Ovary (tissue), 10 donors: ENCODE measurements at regions of chr18 and their contacts with region 1.

Region 1: GRCh38 chr18:5546660-5547059 is 2.9 kb upstream of the EPB41L3 start:
- DNase-seq: no peak
- H3K4me3 ChIP-seq: no peak overlapping the region
- H3K27ac ChIP-seq: no peak overlapping the region
- H3K4me1 ChIP-seq: peaks cover 3% of the 10 kb centered on the region
- H3K27me3 ChIP-seq: no peaks in the 10 kb centered on the region
- CTCF ChIP-seq: peak in 1 of 3 donors; percentile 17
- EP300 ChIP-seq: no peak
- POLR2A ChIP-seq: no peak

Region 2: GRCh38 chr18:5424903-5425664 is 121.6 kb before region 1 on chr18:
- intact Hi-C with region 1: loop called in 1 of 4 experiments (anchors 10 kb)
- DNase-seq: no peak
- H3K4me3 ChIP-seq: no peak overlapping the region
- H3K27ac ChIP-seq: no peak overlapping the region
- H3K4me1 ChIP-seq: no peaks in the 10 kb centered on the region
- H3K27me3 ChIP-seq: no peaks in the 10 kb centered on the region
- CTCF ChIP-seq: peak in 1 of 3 donors; percentile 36
- EP300 ChIP-seq: no peak
- POLR2A ChIP-seq: no peak

Region 3: GRCh38 chr18:5456577-5457463 is 89.8 kb before region 1 on chr18:
- intact Hi-C with region 1: no loop called
- DNase-seq: no peak
- H3K4me3 ChIP-seq: no peak overlapping the region
- H3K27ac ChIP-seq: no peak overlapping the region
- H3K4me1 ChIP-seq: no peaks in the 10 kb centered on the region
- H3K27me3 ChIP-seq: no peaks in the 10 kb centered on the region
- CTCF ChIP-seq: peak in 1 of 3 donors; percentile 11
- EP300 ChIP-seq: no peak
- POLR2A ChIP-seq: no peak

Region 4: GRCh38 chr18:5596585-5596984 is 49.9 kb after region 1 on chr18:
- intact Hi-C with region 1: no loop called
- DNase-seq: no peak
- H3K4me3 ChIP-seq: no peak overlapping the region
- H3K27ac ChIP-seq: no peak overlapping the region
- H3K4me1 ChIP-seq: no peaks in the 10 kb centered on the region
- H3K27me3 ChIP-seq: no peaks in the 10 kb centered on the region
- CTCF ChIP-seq: no peak
- EP300 ChIP-seq: no peak
- POLR2A ChIP-seq: no peak

Region 5: GRCh38 chr18:5806860-5807259 is 260.2 kb after region 1 on chr18:
- intact Hi-C with region 1: no loop called
- DNase-seq: no peak
- H3K4me3 ChIP-seq: no peak overlapping the region
- H3K27ac ChIP-seq: no peak overlapping the region
- H3K4me1 ChIP-seq: no peaks in the 10 kb centered on the region
- H3K27me3 ChIP-seq: no peaks in the 10 kb centered on the region
- CTCF ChIP-seq: no peak
- EP300 ChIP-seq: no peak
- POLR2A ChIP-seq: no peak